ENCODE measurements at regions of chr10 and their contacts with region 1.

Region 1: DNA sequence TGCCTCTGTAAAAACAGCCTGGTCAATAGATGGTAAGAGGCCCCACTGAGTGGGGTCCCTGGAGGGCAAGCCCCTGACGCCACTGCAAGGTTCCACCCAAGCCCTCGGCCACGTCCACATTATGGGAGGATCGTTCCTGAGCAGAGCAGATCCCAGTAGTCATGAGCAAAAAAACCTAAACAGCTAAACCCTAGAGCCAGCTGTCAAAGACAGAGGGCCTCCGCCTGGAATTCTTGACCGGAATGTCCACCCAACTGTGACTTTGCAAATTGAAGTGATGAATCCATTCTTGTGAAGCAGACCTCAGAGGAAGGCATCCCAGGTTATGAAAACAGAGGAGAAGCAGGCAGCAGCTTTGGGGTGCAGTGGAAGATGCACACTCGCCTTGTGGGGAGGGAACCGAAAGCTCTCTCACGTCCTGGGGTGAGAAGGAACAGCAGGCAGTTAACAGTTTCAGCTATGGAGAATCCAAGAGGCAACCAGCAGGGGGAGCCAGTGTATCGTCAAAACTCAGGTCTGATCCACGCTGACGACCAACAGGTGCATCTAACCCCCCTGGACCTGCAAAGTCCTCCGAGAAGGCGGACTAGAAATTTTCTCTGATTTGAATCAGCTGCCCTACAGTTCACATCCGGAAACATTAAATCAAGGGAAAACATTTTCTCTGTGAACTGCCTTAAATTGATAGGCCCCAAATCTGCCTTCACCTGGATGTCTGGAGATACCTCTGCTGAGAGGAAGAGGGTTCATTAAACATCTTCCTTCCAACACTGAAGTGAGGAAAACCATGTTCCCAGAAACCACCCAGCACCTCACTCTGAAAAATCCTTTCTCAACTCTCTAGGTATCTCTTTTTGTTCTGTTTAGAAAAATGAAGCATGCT is 139.1 kb upstream of the PFKP start:
- DNase-seq: peak; percentile 50 to 91 (median 79)

Region 2: DNA sequence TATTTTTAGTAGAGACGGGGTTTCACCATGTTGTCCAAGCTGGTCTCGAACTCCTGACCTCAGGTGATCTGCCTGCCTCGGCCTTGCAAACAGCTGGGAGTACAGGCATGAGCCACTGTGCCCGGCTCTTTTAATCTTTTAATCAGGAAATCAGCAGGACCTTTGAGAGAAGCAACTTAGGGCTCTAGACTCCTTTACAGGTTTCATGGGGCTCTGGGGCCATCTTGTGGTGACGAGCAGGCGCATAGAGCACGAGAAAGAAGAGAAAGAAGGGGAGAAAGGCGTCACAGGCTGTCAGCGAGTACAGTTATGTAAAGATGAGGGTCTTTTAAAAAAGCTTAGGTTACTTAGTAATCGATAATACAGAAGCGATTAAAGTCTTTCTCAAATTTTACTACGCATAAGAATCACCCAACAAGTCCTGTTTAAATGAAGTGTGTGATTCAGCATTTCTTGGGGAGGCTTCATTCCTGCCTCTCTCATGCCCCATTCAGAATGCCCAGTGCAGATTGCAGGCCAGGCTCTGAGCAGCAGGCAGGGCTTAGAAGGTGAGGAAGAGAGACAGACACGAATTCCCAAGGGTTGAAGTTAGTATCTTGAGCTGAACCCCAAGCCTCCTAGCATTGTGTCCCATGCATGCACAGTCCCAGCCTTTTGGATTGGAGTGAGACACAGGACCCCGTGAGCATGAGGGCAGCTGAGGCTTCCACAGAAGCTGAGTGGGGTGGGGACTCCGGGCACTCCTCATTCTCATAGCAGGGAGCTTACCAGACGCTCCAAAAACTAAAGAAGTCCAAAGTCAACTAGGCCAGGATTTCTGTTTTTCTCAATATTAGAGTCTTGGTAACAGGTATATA is 115.5 kb after region 1 on chr10:
- intact Hi-C with region 1: loop called (anchors 5 kb)
- DNase-seq: peak; percentile 45 to 84 (median 72)

Region 3: GRCh38 chr10:3136763-3137611 is 208.8 kb after region 1 on chr10:
- intact Hi-C with region 1: no loop called
- DNase-seq: peak in 41 of 42 donors; percentile 27 to 86 (median 52)